Panc1 (cell line): ENCODE measurements at regions of chr4 and their contacts with region 1.

Region 1: DNA sequence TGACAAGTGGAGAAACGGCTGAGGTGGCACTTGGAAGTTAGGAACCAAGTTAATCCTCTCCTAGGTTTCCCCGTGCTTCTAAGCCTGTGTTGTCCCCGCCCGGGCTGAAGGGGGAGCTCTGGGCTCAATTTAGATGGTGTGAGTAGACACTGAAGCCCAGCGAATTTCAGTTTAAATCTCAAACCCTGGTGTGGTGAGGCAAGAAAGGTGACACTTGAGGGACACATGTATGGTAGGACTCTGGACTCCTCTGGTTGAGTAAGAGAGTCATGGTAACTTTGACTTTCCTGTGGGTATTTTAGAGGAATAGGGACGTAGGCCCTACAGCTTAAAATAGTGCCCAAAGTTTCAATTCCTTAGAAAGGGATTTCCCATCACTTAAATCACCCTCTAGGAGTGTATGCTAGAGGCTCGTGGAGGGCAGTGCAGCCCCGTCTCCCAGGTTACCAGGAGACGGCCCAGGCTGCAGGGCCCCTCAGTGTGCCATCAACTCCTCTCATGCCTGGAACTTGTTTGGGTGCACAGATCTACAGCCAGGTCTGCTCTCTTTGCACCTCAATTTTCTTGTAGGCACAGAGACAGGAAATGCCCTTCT is 24.0 kb downstream of the HAND2 start:
- DNase-seq: no peak
- ATAC-seq: peak; percentile 93
- H3K4me3 ChIP-seq: no peak overlapping the region
- H3K27ac ChIP-seq: no peak overlapping the region
- H3K4me1 ChIP-seq: no peaks in the 10 kb centered on the region
- H3K27me3 ChIP-seq: no peaks in the 10 kb centered on the region
- CTCF ChIP-seq: peak; percentile 82

Region 2: DNA sequence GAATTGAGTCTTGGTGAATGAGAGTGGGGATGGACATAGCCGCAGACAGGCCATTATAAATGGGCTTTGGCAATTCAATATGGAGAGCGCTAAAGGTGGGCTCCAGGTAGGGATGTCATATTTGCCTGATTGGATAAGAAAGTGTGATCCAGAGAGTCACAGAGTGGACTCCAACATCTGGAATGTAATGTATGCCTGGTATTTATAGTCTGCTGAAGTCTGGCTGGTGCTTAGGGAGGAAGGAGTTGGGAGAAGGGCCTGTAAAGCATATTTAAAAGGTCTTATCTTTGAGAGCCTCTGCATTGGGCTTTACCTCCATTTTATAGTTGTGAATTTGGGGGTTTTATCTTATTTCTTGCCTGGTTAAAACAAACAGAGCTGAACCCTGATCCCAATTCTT is 1539.7 kb before region 1 on chr4:
- CTCF ChIA-PET with region 1: no interaction called
- POLR2A ChIA-PET with region 1: no interaction called
- in situ Hi-C with region 1: no loop called
- intact Hi-C with region 1: no loop called
- DNase-seq: no peak
- ATAC-seq: no peak
- H3K4me3 ChIP-seq: no peak overlapping the region
- H3K27ac ChIP-seq: no peak overlapping the region
- H3K4me1 ChIP-seq: no peaks in the 10 kb centered on the region
- H3K27me3 ChIP-seq: no peaks in the 10 kb centered on the region
- CTCF ChIP-seq: no peak

Region 3: GRCh38 chr4:173794662-173795061 is 288.6 kb after region 1 on chr4:
- CTCF ChIA-PET with region 1: no interaction called
- POLR2A ChIA-PET with region 1: no interaction called
- in situ Hi-C with region 1: no loop called
- intact Hi-C with region 1: no loop called
- DNase-seq: no peak
- ATAC-seq: no peak
- H3K4me3 ChIP-seq: no peak overlapping the region
- H3K27ac ChIP-seq: no peak overlapping the region
- H3K4me1 ChIP-seq: no peaks in the 10 kb centered on the region
- H3K27me3 ChIP-seq: no peaks in the 10 kb centered on the region
- CTCF ChIP-seq: no peak

Region 4: DNA sequence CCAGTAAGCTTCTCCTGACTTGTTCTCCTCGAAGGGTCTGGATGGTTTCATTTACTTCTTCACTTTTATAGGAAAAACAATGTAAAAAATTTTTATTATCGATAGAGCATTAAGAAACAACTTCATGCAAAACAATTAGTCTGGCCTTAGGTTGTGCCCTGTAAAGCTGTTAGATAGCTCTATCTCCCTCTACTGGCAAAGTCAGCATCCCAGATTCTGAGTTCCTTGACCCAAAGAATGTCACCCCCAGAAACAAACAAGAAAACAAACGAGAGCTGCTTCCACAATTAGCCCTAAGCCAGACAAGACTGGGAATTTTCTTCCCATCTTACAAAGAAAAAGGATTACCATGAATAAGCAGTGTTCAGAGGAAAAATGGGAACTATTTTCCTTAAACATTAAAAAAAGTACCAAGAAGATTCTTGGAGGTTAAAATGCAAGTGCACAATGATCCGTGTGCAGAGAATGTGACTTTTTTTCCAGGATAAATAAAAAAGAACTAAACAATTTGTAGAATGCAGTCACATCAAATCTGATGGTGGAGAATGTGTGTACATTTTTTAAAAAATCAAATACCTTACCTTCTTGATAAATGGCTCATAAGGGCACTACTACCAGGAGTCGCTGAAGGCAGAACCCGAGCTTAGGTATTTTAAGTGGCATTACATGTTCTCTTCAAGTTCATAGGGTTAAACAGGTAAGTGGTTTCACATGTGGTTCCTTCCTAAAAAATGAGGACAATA is 484.3 kb after region 1 on chr4:
- CTCF ChIA-PET with region 1: no interaction called
- POLR2A ChIA-PET with region 1: no interaction called
- in situ Hi-C with region 1: no loop called
- intact Hi-C with region 1: loop called (anchors 5 kb)
- DNase-seq: peak; percentile 8
- ATAC-seq: no peak
- H3K4me3 ChIP-seq: no peak overlapping the region
- H3K27ac ChIP-seq: no peak overlapping the region
- H3K4me1 ChIP-seq: no peaks in the 10 kb centered on the region
- H3K27me3 ChIP-seq: no peaks in the 10 kb centered on the region
- CTCF ChIP-seq: peak; percentile 60

Region 5: DNA sequence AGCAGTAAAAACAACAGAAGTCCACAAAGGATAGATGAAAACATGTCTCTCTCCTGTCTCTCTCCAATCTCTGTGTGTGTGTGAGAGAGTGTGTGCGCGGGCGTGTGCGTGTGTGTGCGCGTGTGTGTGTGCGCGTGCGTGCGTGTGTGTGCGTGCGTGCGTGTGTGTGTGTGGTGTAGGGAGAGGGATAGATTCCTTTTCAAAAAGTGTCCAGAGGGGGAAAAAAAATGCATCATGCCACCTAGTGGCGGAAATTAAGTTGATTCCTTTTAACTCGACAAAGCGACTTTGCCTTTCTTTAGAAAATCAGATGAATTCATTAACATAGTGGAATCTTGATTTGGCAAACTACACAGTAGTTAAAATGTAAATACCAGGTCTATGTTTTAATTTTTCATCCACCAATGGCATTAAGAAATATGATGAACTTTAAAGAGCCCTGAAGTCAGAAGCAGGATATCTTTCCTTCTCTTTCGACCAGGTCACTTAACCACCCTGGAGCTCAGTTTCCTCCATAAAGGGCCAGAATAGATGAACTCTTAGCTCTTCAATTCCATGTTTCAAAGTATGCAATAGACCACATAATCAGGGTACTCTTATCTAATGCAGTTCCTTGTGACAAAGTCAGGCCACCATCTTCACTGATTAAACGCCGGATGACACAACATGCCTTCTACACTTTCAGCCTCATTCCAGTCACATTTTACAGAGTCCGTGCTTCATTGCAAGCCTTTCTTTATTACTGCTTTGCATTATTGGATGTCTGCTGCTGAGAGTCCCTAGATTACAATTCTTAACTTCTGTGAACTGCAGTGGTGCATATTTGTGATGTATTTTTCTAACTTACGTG is 614.6 kb after region 1 on chr4:
- CTCF ChIA-PET with region 1: no interaction called
- POLR2A ChIA-PET with region 1: no interaction called
- in situ Hi-C with region 1: no loop called
- intact Hi-C with region 1: loop called (anchors 2 kb)
- DNase-seq: peak; percentile 12
- ATAC-seq: peak; percentile 83
- H3K4me3 ChIP-seq: peak overlapping the region; percentile 30 to 36
- H3K27ac ChIP-seq: no peak overlapping the region
- H3K4me1 ChIP-seq: no peaks in the 10 kb centered on the region
- H3K27me3 ChIP-seq: peaks cover 2% of the 10 kb centered on the region; the same call in 1 of the 2 replicates
- CTCF ChIP-seq: peak; percentile 66

Region 6: DNA sequence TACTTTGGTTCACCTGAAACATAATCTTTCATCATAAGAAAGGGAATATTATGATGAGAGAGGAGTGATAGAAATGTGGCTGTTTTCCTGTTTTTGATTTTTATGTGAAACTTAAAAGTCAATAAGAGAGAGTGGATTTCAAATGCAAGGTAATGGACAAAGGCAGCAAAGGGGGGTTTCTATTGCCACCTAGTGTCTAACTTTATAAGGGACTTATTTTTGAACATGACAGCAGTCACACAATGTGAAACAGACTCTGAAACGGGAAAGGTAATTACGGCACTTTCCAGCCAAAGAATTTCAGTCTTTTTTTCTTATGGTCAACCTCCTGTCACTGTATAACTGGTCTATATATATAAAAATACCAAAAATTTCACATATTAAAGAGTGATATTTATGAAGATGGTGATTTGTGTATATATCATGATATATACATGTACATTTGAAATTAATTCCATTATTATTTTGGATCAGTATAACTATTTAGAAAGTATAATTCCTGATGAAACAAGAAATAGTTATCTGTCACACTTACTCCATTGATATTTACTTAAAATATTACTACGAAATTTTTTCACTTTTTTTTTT is 650.3 kb after region 1 on chr4:
- CTCF ChIA-PET with region 1: no interaction called
- POLR2A ChIA-PET with region 1: no interaction called
- in situ Hi-C with region 1: no loop called
- intact Hi-C with region 1: loop called (anchors 5 kb)
- DNase-seq: peak; percentile 61
- ATAC-seq: peak; percentile 73; the same call in 1 of the 2 replicates
- H3K4me3 ChIP-seq: no peak overlapping the region
- H3K27ac ChIP-seq: no peak overlapping the region
- H3K4me1 ChIP-seq: no peaks in the 10 kb centered on the region
- H3K27me3 ChIP-seq: no peaks in the 10 kb centered on the region
- CTCF ChIP-seq: peak; percentile 69; the same call in 1 of the 2 replicates